Calu3 (cell line): ENCODE measurements at regions of chrX and their contacts with region 1.

Region 1: DNA sequence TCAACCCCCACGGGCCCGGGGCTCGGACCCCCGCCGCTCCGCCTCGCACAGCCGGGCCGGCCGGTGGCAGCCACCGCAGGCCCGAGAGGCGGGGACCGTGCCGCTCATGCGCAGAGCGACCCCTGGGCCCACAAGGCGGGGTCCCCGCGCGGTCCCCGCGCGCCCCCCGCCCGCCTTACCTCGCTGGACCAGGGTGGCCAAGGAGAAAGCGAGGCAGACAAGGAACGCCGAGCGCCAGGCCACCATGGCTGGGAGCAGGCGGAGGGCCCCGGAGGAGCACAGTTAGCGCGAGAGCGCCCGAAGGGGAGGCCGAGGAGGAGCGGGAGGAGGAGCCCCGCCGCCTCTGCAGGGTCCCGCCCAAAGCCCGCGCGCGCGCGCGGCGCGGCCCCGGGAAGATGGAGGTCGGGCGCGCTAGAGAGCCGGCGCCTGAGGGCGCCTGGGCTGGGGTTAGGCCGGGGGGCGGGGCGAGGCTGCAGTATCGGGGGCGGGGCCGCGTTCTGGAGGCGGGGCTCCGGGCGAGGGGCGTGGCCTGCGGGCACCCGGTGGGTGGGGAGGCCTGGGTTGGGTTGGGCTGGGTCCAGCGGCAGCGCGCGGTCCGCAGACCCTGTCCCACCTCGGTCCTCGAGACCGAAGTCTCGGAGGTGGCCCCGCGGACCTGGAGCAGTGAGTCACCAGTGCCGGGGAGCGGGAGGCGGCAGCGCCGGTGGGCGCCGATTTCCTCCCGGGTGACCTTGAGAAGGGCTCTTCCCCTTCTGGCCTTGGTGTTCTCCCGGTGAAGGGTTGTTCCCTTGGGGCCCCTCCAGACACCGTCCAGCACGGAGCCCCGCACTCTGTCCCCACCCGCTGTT is at the start of gene CD99L2:
- DNase-seq: peak; percentile 93
- H3K4me3 Mint-ChIP-seq: peak within 1 kb of the TSS; percentile 70
- H3K27ac Mint-ChIP-seq: no peak within 1 kb of the TSS
- H3K4me1 Mint-ChIP-seq: peaks cover 8% of the 10 kb centered on the region
- H3K27me3 Mint-ChIP-seq: peaks cover 10% of the 10 kb centered on the region
- CTCF ChIP-seq: no peak
- total RNA-seq, gene CD99L2: 21.1 and 21.9 TPM in 2 replicates

Region 2: GRCh38 chrX:150879855-150880808 is 18.4 kb before region 1 on chrX:
- CTCF ChIA-PET with region 1: no interaction called
- intact Hi-C with region 1: no loop called
- DNase-seq: no peak
- H3K4me3 Mint-ChIP-seq: no peak overlapping the region
- H3K27ac Mint-ChIP-seq: no peak overlapping the region
- H3K4me1 Mint-ChIP-seq: no peaks in the 10 kb centered on the region
- H3K27me3 Mint-ChIP-seq: no peaks in the 10 kb centered on the region
- CTCF ChIP-seq: no peak

Region 3: GRCh38 chrX:150982788-150983520 is 84.4 kb after region 1 on chrX and contains the start of gene HMGB3:
- CTCF ChIA-PET with region 1: interaction called, 3 read pairs
- intact Hi-C with region 1: loop called (anchors 5 kb)
- DNase-seq: peak; percentile 90
- H3K4me3 Mint-ChIP-seq: peak within 1 kb of the TSS; percentile 73
- H3K27ac Mint-ChIP-seq: no peak within 1 kb of the TSS
- H3K4me1 Mint-ChIP-seq: peaks cover 11% of the 10 kb centered on the region
- H3K27me3 Mint-ChIP-seq: no peaks in the 10 kb centered on the region
- CTCF ChIP-seq: no peak
- total RNA-seq, gene HMGB3: 99.4 and 143 TPM in 2 replicates

Region 4: GRCh38 chrX:151279161-151279560 is 380.6 kb after region 1 on chrX:
- CTCF ChIA-PET with region 1: no interaction called
- intact Hi-C with region 1: no loop called
- DNase-seq: no peak
- H3K4me3 Mint-ChIP-seq: no peak overlapping the region
- H3K27ac Mint-ChIP-seq: no peak overlapping the region
- H3K4me1 Mint-ChIP-seq: no peaks in the 10 kb centered on the region
- H3K27me3 Mint-ChIP-seq: peaks cover under 1% of the 10 kb centered on the region
- CTCF ChIP-seq: no peak